Activated CD4-positive, alpha-beta T cell treated with anti-CD3 and anti-CD28 coated beads for 36 hours (primary cell): ENCODE measurements at regions of chr5 and their contacts with region 1.

Region 1: DNA sequence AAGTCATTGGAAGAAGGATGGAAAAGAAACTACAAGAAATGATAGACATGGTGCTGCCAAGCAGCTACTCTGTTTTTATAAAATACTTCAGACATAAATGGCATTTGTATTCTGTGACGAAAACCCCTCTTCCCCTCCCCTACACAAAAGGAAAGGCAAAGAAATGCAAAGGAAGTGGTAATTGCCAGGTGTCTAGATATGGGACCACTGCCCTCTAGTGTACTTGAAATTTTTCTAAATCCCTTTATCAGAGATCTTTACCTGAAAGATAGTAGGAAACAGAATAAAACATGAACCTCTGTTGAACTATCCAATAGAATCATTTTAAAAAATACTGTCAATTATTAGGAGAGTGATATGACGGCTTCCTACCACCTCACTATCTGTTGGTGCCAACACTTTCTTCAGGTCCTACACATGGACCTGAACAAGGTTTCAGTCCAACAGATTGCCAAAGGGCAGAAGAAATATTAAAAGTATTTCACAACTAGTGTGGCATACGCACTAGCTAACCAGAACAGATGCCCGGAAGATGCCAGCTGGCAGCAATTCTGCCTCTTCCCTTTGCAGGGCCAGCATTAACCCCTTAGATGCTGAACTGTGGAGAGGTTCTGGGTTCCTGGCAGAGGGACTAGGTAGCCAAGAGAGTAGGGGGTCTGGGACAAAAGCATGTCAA is 104.1 kb downstream of the TSSK1B start:
- DNase-seq: peak; percentile 13
- ATAC-seq: peak; percentile 78
- H3K4me3 Mint-ChIP-seq: no peak overlapping the region
- H3K27ac Mint-ChIP-seq: peak overlapping the region; percentile 17
- H3K4me1 Mint-ChIP-seq: peaks cover 11% of the 10 kb centered on the region
- H3K27me3 Mint-ChIP-seq: no peaks in the 10 kb centered on the region

Region 2: GRCh38 chr5:113043491-113043931 is 287.2 kb before region 1 on chr5:
- CTCF ChIA-PET with region 1: interaction called, 3 read pairs
- POLR2A ChIA-PET with region 1: no interaction called
- intact Hi-C with region 1: loop called in 1 of 2 experiments (anchors 2 kb)
- DNase-seq: peak; percentile 52
- ATAC-seq: no peak
- H3K4me3 Mint-ChIP-seq: no peak overlapping the region
- H3K27ac Mint-ChIP-seq: no peak overlapping the region
- H3K4me1 Mint-ChIP-seq: no peaks in the 10 kb centered on the region
- H3K27me3 Mint-ChIP-seq: no peaks in the 10 kb centered on the region